Dendritic cell treated with granulocyte-macrophage colony-stimulating factor and Interleukin-4, amounts not matched to agents 40 ng/mL and 50 ng/mL, for 4 days (primary cell): ENCODE measurements at regions of chr19 and their contacts with region 1.

Region 1: GRCh38 chr19:49779731-49780589 is 13.2 kb downstream of the AP2A1 start:
- H3K4me3 Mint-ChIP-seq: peak overlapping the region; percentile 78
- H3K27ac Mint-ChIP-seq: peak overlapping the region; percentile 96
- H3K4me1 Mint-ChIP-seq: peaks cover 58% of the 10 kb centered on the region
- H3K27me3 Mint-ChIP-seq: no peaks in the 10 kb centered on the region

Region 2: GRCh38 chr19:49716154-49716553 is 63.8 kb before region 1 on chr19:
- intact Hi-C with region 1: loop called (anchors 2 kb)
- H3K4me3 Mint-ChIP-seq: no peak overlapping the region
- H3K27ac Mint-ChIP-seq: no peak overlapping the region
- H3K4me1 Mint-ChIP-seq: peaks cover 19% of the 10 kb centered on the region
- H3K27me3 Mint-ChIP-seq: peaks cover 3% of the 10 kb centered on the region